Tibial artery (tissue), 4 donors: ENCODE measurements at regions of chrX and their contacts with region 1.

Region 1: GRCh38 chrX:4193500-4194190 is 480.2 kb upstream of the PRKX start:
- DNase-seq: no peak
- H3K4me3 ChIP-seq: no peak overlapping the region
- H3K27ac ChIP-seq: no peak overlapping the region
- H3K4me1 ChIP-seq: no peaks in the 10 kb centered on the region
- H3K27me3 ChIP-seq: no peaks in the 10 kb centered on the region
- CTCF ChIP-seq: no peak

Region 2: DNA sequence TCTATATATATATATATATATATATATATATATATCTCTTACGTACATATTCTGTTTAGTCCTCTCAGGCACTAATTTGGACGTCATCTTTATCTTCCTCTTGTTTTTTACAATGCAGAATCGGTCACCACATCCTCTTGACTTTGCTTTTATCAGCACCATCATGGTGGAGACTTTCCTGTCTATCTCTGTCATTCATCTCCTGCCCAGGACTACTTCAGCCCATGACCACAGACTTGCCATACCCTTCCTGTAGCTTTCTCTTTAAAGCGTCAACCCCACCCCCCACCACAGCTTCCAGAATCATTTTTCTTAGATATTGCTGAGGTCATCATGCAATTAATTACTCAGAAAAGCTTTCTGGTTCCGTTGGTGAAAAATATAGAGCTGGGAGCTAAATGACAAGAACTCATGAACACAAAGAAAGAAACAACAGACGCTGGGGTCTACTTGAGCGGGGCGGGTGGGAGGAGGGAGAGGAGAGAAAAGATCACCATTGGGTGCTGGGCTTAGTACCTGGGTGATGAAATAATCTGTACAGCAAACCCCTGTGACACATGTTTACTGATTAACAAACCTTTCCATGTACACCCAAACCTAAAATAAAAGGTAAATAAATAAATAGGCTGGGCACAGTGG is 449.7 kb before region 1 on chrX:
- intact Hi-C with region 1: no loop called
- DNase-seq: no peak
- H3K4me3 ChIP-seq: no peak overlapping the region
- H3K27ac ChIP-seq: no peak overlapping the region
- H3K4me1 ChIP-seq: no peaks in the 10 kb centered on the region
- H3K27me3 ChIP-seq: no peaks in the 10 kb centered on the region
- CTCF ChIP-seq: no peak

Region 3: GRCh38 chrX:4035874-4036273 is 157.8 kb before region 1 on chrX:
- intact Hi-C with region 1: no loop called
- DNase-seq: no peak
- H3K4me3 ChIP-seq: no peak overlapping the region
- H3K27ac ChIP-seq: no peak overlapping the region
- H3K4me1 ChIP-seq: no peaks in the 10 kb centered on the region
- H3K27me3 ChIP-seq: no peaks in the 10 kb centered on the region
- CTCF ChIP-seq: no peak

Region 4: GRCh38 chrX:4059893-4060292 is 133.8 kb before region 1 on chrX:
- intact Hi-C with region 1: no loop called
- DNase-seq: no peak
- H3K4me3 ChIP-seq: no peak overlapping the region
- H3K27ac ChIP-seq: no peak overlapping the region
- H3K4me1 ChIP-seq: no peaks in the 10 kb centered on the region
- H3K27me3 ChIP-seq: no peaks in the 10 kb centered on the region
- CTCF ChIP-seq: no peak

Region 5: GRCh38 chrX:4118666-4119530 is 74.7 kb before region 1 on chrX:
- intact Hi-C with region 1: loop called (anchors 2 kb)
- DNase-seq: no peak
- H3K4me3 ChIP-seq: no peak overlapping the region
- H3K27ac ChIP-seq: no peak overlapping the region
- H3K4me1 ChIP-seq: no peaks in the 10 kb centered on the region
- H3K27me3 ChIP-seq: no peaks in the 10 kb centered on the region
- CTCF ChIP-seq: no peak

Region 6: DNA sequence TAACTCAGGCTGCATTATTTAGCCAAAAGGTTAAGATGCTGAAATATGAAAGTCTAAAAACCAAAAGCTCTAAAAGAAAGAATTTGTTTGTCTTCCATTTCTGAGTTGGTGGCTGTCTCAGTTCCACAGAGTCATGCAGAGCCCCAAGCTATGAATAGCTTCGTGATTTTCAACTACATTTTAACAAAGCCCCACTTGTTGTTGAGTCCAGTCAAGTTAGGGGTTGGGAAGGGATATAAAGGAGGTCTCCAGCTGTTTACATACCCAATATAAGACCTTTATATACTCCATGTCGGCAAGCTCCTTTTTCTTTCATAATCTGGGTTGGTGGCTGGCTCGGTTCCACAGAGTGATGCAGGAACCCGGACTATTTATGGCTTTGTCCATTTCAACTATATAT is 444.4 kb after region 1 on chrX:
- intact Hi-C with region 1: no loop called
- DNase-seq: no peak
- H3K4me3 ChIP-seq: no peak overlapping the region
- H3K27ac ChIP-seq: no peak overlapping the region
- H3K4me1 ChIP-seq: no peaks in the 10 kb centered on the region
- H3K27me3 ChIP-seq: no peaks in the 10 kb centered on the region
- CTCF ChIP-seq: no peak